T-cell (primary cell): ENCODE measurements at regions of chr4 and their contacts with region 1.

Region 1: DNA sequence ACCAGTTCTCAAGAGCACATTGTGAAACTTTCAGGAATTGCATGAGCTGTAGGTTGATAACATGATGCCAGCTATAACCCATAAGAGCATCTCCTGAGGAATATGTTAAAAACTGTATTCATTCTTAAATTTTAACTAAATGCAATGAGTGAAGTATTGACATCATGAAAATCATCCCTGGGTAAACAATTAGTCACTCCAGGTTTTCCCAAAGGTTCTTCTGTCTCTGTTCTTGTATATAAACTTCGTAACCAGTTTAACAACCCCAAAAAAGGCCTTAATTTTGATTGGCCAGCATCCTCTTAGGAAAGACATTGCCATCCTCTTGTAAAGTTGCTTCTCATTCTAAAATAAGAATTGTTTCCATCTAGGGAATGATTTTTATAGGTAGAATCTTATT is 80.4 kb downstream of the TET2 start:
- DNase-seq: no peak
- ATAC-seq: no peak
- H3K4me3 ChIP-seq: no peak overlapping the region
- H3K4me3 Mint-ChIP-seq: no peak overlapping the region
- H3K27ac ChIP-seq: no peak overlapping the region
- H3K27ac Mint-ChIP-seq: no peak overlapping the region
- H3K4me1 ChIP-seq: no peaks in the 10 kb centered on the region
- H3K4me1 Mint-ChIP-seq: peaks cover 14 to 30% (median 19%) of the 10 kb centered on the region in 3 donors
- H3K27me3 ChIP-seq: no peaks in the 10 kb centered on the region
- H3K27me3 Mint-ChIP-seq: no peaks in the 10 kb centered on the region

Region 2: DNA sequence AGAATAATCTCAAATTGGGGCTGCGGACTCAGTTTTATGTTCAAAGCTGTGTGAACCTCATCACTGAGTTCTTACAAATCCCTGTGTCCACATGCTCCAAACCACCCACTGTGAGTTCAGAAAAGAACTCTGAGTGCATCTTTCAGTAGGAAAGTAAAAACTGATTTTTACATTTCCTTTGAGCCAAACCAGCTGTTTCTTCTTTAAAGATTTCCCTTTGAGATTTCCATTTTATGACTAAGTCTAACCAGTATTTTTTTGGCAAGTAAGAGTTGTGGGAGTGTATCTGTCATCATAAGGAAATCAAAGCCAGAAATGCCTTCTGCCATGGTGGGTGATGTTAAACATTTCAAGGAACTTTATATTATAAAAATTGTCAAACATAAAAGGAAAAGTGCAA is 19.7 kb after region 1 on chr4:
- CTCF ChIA-PET with region 1: interaction called in 1 of 2 experiments, 10 read pairs
- POLR2A ChIA-PET with region 1: interaction called in 1 of 2 experiments, 3 read pairs
- DNase-seq: no peak
- ATAC-seq: no peak
- H3K4me3 ChIP-seq: no peak overlapping the region
- H3K4me3 Mint-ChIP-seq: no peak overlapping the region
- H3K27ac ChIP-seq: no peak overlapping the region
- H3K27ac Mint-ChIP-seq: no peak overlapping the region
- H3K4me1 ChIP-seq: no peaks in the 10 kb centered on the region
- H3K4me1 Mint-ChIP-seq: no peaks in the 10 kb centered on the region
- H3K27me3 ChIP-seq: no peaks in the 10 kb centered on the region
- H3K27me3 Mint-ChIP-seq: no peaks in the 10 kb centered on the region

Region 3: GRCh38 chr4:105280338-105281123 is 53.5 kb after region 1 on chr4:
- CTCF ChIA-PET with region 1: no interaction called
- POLR2A ChIA-PET with region 1: no interaction called
- DNase-seq: no peak
- ATAC-seq: no peak
- H3K4me3 ChIP-seq: no peak overlapping the region
- H3K4me3 Mint-ChIP-seq: no peak overlapping the region
- H3K27ac ChIP-seq: no peak overlapping the region
- H3K27ac Mint-ChIP-seq: peak overlapping the region in 1 of 2 donors; percentile 62
- H3K4me1 ChIP-seq: no peaks in the 10 kb centered on the region
- H3K4me1 Mint-ChIP-seq: peaks cover 2 to 12% (median 5%) of the 10 kb centered on the region in 3 donors
- H3K27me3 ChIP-seq: no peaks in the 10 kb centered on the region
- H3K27me3 Mint-ChIP-seq: no peaks in the 10 kb centered on the region

Region 4: DNA sequence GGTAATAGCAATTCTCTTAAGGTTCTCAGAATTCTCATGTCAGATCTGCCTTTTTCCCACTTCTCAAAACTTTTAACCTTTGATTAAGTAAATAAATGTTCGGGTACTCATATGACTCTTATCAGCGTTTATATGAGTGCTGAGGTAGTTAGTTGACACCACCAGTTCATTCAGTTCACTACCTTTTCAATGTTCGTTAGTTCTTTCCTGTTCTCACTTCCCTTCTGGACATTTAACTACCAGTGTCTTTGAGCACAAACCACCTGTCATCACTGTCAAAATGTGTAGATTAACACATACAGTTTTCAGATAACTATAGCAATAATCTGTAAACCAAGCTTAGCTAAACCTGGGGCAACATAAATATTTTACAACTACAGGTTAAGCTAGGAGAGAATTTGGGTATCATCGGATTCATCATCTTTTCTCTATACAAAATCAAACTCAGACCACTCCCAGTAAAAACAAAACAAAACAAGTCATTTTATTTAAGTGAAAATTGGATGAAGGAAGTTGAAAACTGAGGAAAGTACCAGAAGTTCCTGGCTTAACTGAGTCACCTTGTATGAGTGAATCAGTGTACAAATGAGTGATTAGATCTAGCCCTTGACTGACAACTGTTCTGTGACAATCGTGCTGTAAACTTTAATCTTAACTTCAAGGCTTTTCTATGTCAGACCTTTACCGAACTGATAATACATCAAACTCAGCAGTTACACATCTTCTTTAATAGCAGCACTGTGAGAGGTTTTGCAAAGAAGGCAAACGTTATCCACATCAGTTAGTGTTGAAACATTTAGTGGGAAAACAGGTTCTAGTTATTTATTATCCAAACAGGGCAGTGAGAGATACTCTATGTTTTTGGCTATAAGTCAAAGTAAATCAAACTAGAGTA is 367.3 kb after region 1 on chr4:
- CTCF ChIA-PET with region 1: no interaction called
- POLR2A ChIA-PET with region 1: no interaction called
- DNase-seq: no peak
- ATAC-seq: no peak
- H3K4me3 ChIP-seq: no peak overlapping the region
- H3K4me3 Mint-ChIP-seq: no peak overlapping the region
- H3K27ac ChIP-seq: no peak overlapping the region
- H3K27ac Mint-ChIP-seq: no peak overlapping the region
- H3K4me1 ChIP-seq: no peaks in the 10 kb centered on the region
- H3K4me1 Mint-ChIP-seq: no peaks in the 10 kb centered on the region
- H3K27me3 ChIP-seq: peaks cover 0 to 7% of the 10 kb centered on the region in 2 experiments
- H3K27me3 Mint-ChIP-seq: peaks cover 18 to 25% of the 10 kb centered on the region in 2 donors

Region 5: DNA sequence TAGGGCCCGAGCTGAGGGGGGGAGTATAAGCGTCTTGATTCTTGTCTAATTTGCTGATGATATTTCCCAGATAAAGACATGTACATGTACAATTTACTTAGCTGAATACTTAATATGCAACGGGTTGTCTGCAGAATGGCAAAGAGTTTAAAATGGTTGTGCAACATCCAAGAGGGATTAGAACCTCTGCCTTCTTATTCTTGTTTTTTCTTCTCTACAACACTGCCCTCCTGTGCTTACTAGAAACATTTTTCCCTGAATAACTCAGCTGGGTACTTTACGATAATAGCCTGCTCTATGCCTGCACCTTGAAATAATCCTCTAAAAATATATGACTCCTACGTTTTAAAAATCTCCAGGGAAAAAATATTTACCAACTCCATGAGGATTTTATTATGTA is 439.6 kb after region 1 on chr4:
- CTCF ChIA-PET with region 1: no interaction called
- POLR2A ChIA-PET with region 1: no interaction called
- DNase-seq: no peak
- ATAC-seq: no peak
- H3K4me3 ChIP-seq: no peak overlapping the region
- H3K4me3 Mint-ChIP-seq: no peak overlapping the region
- H3K27ac ChIP-seq: no peak overlapping the region
- H3K27ac Mint-ChIP-seq: no peak overlapping the region
- H3K4me1 ChIP-seq: no peaks in the 10 kb centered on the region
- H3K4me1 Mint-ChIP-seq: no peaks in the 10 kb centered on the region
- H3K27me3 ChIP-seq: peaks cover 0 to 10% of the 10 kb centered on the region in 2 experiments
- H3K27me3 Mint-ChIP-seq: peaks cover 10 to 15% of the 10 kb centered on the region in 2 donors